ENCODE measurements at regions of chr13 and their contacts with region 1.

Region 1: GRCh38 chr13:112643759-112644459 is 45.9 kb upstream of the ATP11A start:
- DNase-seq: no peak
- H3K4me3 ChIP-seq: no peak overlapping the region
- H3K27ac ChIP-seq: no peak overlapping the region
- H3K4me1 ChIP-seq: no peaks in the 10 kb centered on the region
- H3K27me3 ChIP-seq: no peaks in the 10 kb centered on the region
- CTCF ChIP-seq: no peak
- POLR2A ChIP-seq: no peak

Region 2: GRCh38 chr13:112779856-112780604 is 136.1 kb after region 1 on chr13:
- intact Hi-C with region 1: no loop called
- DNase-seq: no peak
- H3K4me3 ChIP-seq: no peak overlapping the region
- H3K27ac ChIP-seq: no peak overlapping the region
- H3K4me1 ChIP-seq: peaks cover 33% of the 10 kb centered on the region
- H3K27me3 ChIP-seq: no peaks in the 10 kb centered on the region
- CTCF ChIP-seq: no peak
- POLR2A ChIP-seq: no peak

Region 3: DNA sequence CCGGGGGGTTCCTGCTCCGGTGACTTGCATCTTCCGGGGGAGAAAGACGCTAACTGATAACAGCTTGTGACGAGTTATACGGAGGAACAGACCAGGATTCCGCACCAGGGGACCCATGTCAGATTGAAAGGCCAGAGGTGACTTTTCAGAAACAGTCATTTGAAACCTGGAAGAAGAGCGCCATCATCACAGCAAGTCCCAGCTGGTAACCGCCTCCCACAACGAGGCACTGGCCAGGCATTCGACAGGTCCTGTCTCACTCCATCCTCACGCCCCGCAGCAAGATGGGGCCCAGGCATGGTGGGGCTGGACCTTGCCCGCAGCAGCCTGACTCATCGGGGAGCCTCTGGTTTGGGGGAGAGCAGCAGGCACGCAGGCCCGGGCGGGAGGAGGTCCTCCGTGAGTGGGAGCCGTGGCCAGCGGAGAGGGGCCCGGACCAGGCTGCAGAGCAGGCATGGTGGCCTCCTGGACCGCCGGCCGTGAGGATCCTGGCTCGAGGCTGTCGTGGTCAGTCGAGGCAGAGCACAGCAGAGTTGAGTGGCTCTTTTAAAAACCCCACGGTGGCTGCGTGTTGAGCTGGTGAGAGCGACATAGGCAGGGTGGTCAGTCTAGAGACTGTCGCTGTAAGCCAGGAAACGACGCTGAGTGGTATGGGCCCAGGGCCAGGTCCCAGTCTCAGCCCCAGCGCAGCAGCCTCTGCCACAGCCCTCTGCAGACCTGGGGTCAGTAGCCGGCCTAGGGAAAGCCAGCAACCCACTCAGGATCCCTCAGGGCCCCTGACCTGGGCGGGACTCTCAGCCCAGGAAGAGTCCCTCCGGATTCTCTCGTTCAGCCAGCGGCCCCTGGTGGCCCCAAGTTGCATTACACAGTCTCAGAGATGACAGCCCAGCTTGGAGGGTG is 230.2 kb after region 1 on chr13:
- intact Hi-C with region 1: loop called (anchors 10 kb)
- DNase-seq: peak; percentile 87
- H3K4me3 ChIP-seq: no peak overlapping the region
- H3K27ac ChIP-seq: no peak overlapping the region
- H3K4me1 ChIP-seq: peaks cover 4% of the 10 kb centered on the region
- H3K27me3 ChIP-seq: no peaks in the 10 kb centered on the region
- CTCF ChIP-seq: peak; percentile 92 to 94 (median 93)
- POLR2A ChIP-seq: no peak

Measured in testis (tissue), 5 donors.